Mammary epithelial cell (primary cell): ENCODE measurements at regions of chr9 and their contacts with region 1.

Region 1: GRCh38 chr9:105656131-105656921 is 5.9 kb upstream of the TAL2 start:
- DNase-seq: peak; percentile 9
- H3K4me3 ChIP-seq: peak overlapping the region; percentile 44 to 61 (median 57)
- H3K27ac ChIP-seq: no peak overlapping the region
- H3K4me1 ChIP-seq: peaks cover 6% of the 10 kb centered on the region
- H3K27me3 ChIP-seq: peaks cover 1% of the 10 kb centered on the region
- CTCF ChIP-seq: peak in 1 of 2 donors; percentile 27

Region 2: DNA sequence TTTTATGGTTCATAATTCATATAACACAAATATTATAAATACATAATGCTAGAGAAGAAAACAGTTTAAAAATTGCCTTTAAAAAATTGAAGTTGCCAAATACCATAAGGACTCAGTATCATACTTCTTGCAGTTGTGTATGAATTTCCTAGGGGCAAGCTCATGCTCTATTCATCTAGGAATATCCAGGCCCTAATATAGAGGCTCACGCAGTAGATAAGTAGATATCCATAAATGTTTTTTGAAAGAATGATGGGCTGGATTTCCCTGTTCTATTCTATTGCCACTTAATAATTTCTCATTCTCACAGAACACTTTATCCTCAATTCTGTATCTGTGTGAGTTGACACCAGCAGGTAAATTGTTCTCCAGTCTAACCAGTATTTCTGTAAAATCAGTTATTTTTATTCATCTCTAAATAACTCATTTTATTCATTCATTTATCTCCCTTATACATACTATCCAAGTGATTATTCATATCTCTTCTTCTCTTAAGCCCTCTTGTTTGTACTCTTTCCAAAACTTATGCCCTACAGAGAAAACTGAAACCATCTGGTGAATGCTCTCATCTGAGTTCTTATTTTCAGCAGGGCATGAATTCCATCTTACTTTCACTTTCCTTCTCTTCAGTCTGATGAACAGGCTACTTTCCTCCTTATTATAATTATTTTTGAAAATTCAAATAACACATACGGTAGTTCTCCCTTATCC is 314.7 kb before region 1 on chr9:
- CTCF ChIA-PET with region 1: no interaction called
- dilution Hi-C with region 1: no loop called
- in situ Hi-C with region 1: no loop called
- intact Hi-C with region 1: no loop called
- DNase-seq: no peak
- H3K4me3 ChIP-seq: peak overlapping the region in 1 of 3 experiments; percentile 15
- H3K27ac ChIP-seq: no peak overlapping the region
- H3K4me1 ChIP-seq: no peaks in the 10 kb centered on the region
- H3K27me3 ChIP-seq: no peaks in the 10 kb centered on the region
- CTCF ChIP-seq: no peak

Region 3: GRCh38 chr9:105621001-105621400 is 35.3 kb before region 1 on chr9:
- CTCF ChIA-PET with region 1: no interaction called
- dilution Hi-C with region 1: loop called (anchors 5 kb)
- in situ Hi-C with region 1: no loop called
- intact Hi-C with region 1: no loop called
- DNase-seq: no peak
- H3K4me3 ChIP-seq: no peak overlapping the region
- H3K27ac ChIP-seq: no peak overlapping the region
- H3K4me1 ChIP-seq: no peaks in the 10 kb centered on the region
- H3K27me3 ChIP-seq: no peaks in the 10 kb centered on the region
- CTCF ChIP-seq: no peak

Region 4: DNA sequence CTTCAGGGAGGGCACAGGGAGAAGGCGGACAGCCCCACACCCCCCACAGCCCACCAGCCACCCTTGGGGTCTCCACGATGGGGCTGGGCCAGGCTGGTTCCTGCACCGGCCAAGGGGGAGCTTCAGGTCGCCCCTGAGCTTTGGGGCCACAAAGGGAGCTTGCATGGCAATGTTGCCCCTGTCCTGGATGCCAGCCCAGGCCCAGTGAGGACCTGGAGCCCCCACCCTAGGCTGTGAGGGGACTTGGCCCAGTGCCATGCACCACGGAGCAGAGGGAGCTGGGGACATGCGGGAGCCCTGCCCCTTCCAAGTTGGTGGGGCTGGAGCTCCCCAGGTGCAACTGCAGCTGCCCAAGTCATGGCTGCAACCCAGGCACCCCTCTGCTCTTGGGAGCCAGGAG is 56.4 kb after region 1 on chr9:
- CTCF ChIA-PET with region 1: no interaction called
- dilution Hi-C with region 1: no loop called
- in situ Hi-C with region 1: no loop called
- intact Hi-C with region 1: no loop called
- DNase-seq: no peak
- H3K4me3 ChIP-seq: no peak overlapping the region
- H3K27ac ChIP-seq: no peak overlapping the region
- H3K4me1 ChIP-seq: no peaks in the 10 kb centered on the region
- H3K27me3 ChIP-seq: no peaks in the 10 kb centered on the region
- CTCF ChIP-seq: no peak